Activated CD4-positive, alpha-beta memory T cell treated with anti-CD3 and anti-CD28 coated beads, Interleukin-2, amount 10 ng/mL, durations not matched to agents 7 days and 5 days (primary cell): ENCODE measurements at regions of chr10 and their contacts with region 1.

Region 1: GRCh38 chr10:89217057-89217990 is 10.2 kb upstream of the CH25H start:
- DNase-seq: peak; percentile 63
- H3K4me3 Mint-ChIP-seq: no peak overlapping the region
- H3K27ac Mint-ChIP-seq: no peak overlapping the region
- H3K4me1 Mint-ChIP-seq: peaks cover 10% of the 10 kb centered on the region
- H3K27me3 Mint-ChIP-seq: no peaks in the 10 kb centered on the region

Region 2: GRCh38 chr10:89029785-89030437 is 187.4 kb before region 1 on chr10:
- CTCF ChIA-PET with region 1: interaction called, 50 read pairs
- POLR2A ChIA-PET with region 1: interaction called, 4 read pairs
- DNase-seq: peak; percentile 73
- H3K4me3 Mint-ChIP-seq: no peak overlapping the region
- H3K27ac Mint-ChIP-seq: no peak overlapping the region
- H3K4me1 Mint-ChIP-seq: peaks cover 23% of the 10 kb centered on the region
- H3K27me3 Mint-ChIP-seq: no peaks in the 10 kb centered on the region

Region 3: GRCh38 chr10:89207181-89207800 is 10.0 kb before region 1 on chr10 and contains the start of gene CH25H:
- CTCF ChIA-PET with region 1: interaction called, 27 read pairs
- POLR2A ChIA-PET with region 1: no interaction called
- DNase-seq: peak; percentile 42
- H3K4me3 Mint-ChIP-seq: peak within 1 kb of the TSS; percentile 71
- H3K27ac Mint-ChIP-seq: peak within 1 kb of the TSS; percentile 2
- H3K4me1 Mint-ChIP-seq: peaks cover 22% of the 10 kb centered on the region
- H3K27me3 Mint-ChIP-seq: peaks cover 32% of the 10 kb centered on the region
- total RNA-seq, gene CH25H: not detected